PC-3 (cell line): ENCODE measurements at regions of chr2 and their contacts with region 1.

Region 1: GRCh38 chr2:109702618-109702985 is 88.4 kb downstream of the SOWAHC start:
- DNase-seq: peak; percentile 87
- ATAC-seq: peak; percentile 80
- H3K4me3 ChIP-seq: peak overlapping the region; percentile 38; the same call in 1 of the 2 replicates
- H3K27ac ChIP-seq: peak overlapping the region; percentile 95
- H3K4me1 ChIP-seq: peaks cover 46% of the 10 kb centered on the region
- H3K27me3 ChIP-seq: no peaks in the 10 kb centered on the region
- CTCF ChIP-seq: no peak

Region 2: DNA sequence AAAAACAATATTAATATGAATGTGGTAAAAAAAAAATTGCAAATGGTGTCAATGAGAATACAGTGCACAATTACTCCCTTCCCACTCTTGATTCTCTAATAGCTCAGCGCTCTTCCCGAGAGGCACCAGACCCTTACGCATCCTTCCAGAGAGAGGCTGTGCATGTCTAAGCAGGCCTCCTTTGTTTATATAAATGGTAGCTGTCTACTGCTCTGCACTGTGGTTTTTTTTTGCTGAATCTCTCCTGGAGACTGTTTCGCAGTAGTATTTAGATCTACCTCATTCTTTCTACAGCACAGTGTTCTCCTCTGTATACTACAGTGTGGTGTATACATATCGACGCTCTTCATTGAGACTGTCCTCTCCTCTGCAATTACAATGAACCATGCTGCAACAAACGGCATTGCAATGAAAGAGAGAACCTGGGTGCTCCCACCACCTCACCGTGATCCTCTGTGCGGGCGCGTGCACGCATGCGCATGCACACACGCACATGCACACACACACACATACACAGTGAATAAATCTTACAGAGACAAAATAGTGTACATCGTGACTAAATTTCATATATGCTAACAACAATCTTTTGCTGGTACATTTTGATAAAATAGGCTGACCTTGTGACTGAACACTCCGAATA is 108.2 kb before region 1 on chr2:
- CTCF ChIA-PET with region 1: no interaction called
- POLR2A ChIA-PET with region 1: interaction called, 13 read pairs
- intact Hi-C with region 1: no loop called
- DNase-seq: no peak
- ATAC-seq: no peak
- H3K4me3 ChIP-seq: no peak overlapping the region
- H3K27ac ChIP-seq: no peak overlapping the region
- H3K4me1 ChIP-seq: no peaks in the 10 kb centered on the region
- H3K27me3 ChIP-seq: no peaks in the 10 kb centered on the region
- CTCF ChIP-seq: no peak